Activated naive CD4-positive, alpha-beta T cell treated with anti-CD3 and anti-CD28 coated beads for 36 hours (primary cell): ENCODE measurements at regions of chr17 and their contacts with region 1.

Region 1: GRCh38 chr17:44070455-44071197 is at the start of gene G6PC3:
- DNase-seq: peak; percentile 94
- H3K4me3 Mint-ChIP-seq: peak within 1 kb of the TSS; percentile 98
- H3K27ac Mint-ChIP-seq: peak within 1 kb of the TSS; percentile 96
- H3K4me1 Mint-ChIP-seq: peaks cover 42% of the 10 kb centered on the region
- H3K27me3 Mint-ChIP-seq: no peaks in the 10 kb centered on the region
- total RNA-seq, gene G6PC3: 15.9 to 19.4 TPM

Region 2: DNA sequence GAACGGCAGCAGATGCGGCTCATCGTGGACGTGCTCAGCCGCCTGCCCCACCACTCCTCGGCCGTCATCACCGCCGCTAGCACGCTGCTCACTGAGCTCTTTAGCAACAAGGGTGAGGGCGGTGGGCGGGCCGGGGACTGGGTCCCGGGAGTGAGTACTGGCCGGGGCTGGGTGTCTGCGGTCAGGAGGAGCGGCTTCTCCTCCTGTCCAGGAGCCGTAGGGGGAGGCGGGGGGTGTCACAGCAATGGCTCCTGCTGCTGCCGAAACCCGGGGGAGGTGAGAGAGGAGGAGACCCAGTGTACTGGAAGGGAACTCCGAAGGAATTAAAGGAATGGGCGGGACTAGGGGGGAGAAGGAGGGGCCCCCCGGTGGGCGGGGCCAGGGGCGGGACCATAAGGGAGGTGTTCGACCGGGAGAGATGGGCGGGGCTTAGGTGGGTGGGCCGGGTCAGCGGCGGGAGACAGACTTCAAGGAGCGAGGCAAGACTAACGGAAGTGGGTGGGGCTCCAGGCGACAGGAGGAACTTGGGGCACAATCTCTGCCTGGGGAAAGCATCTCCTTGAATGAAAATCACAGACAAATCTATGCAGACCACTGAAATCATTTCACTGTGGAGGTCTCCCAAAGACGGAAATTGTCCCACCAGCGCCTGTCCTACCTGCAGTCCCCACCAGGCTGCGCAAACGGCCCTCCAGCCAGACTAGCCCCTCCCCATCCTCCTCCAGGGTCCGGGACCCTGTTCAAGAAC is 63.9 kb before region 1 on chr17:
- CTCF ChIA-PET with region 1: no interaction called
- intact Hi-C with region 1: loop called (anchors 1 kb)
- DNase-seq: peak; percentile 100
- H3K4me3 Mint-ChIP-seq: peak overlapping the region; percentile 81
- H3K27ac Mint-ChIP-seq: no peak overlapping the region
- H3K4me1 Mint-ChIP-seq: peaks cover 31% of the 10 kb centered on the region
- H3K27me3 Mint-ChIP-seq: peaks cover 18% of the 10 kb centered on the region

Region 3: DNA sequence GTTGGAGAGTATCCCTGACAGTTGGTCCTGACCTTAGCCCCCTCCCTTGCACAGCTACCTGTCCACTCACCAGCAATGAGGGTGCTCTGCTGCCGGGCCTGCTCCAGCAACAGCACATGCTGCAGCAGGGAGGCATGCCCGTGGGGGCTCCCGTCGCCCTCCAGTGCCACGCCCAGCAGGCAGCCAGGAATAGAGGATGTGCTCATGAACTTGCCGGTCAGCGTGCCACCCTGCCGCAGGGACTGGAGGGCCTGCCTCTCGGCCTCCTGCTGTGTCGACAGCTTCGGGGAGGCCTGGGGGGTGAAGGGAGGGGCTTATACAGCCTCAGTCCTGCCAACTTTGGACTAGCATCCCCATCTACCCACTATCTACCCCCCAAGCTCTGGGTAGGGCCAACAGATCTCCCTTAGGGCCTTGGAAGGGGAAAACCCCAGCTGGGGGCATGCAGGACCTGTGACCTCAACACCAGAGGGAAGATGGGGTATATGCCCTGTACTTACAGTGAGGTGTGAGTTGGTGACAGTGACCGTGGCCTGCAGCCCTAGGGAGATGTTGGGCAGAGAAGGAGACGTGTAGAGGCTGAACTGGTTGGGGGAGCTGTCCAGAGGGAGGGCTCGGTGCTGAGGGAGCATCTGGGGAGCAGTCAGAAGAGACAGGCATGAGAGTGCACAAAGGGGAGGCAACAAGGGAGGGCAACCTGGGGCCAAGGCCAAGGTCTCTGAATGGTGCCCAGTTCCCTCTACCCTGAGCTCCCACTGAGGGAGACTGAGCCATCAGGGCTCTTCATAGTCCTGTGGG is 20.8 kb after region 1 on chr17:
- CTCF ChIA-PET with region 1: no interaction called
- intact Hi-C with region 1: no loop called
- DNase-seq: no peak
- H3K4me3 Mint-ChIP-seq: no peak overlapping the region
- H3K27ac Mint-ChIP-seq: no peak overlapping the region
- H3K4me1 Mint-ChIP-seq: peaks cover 24% of the 10 kb centered on the region
- H3K27me3 Mint-ChIP-seq: no peaks in the 10 kb centered on the region

Region 4: DNA sequence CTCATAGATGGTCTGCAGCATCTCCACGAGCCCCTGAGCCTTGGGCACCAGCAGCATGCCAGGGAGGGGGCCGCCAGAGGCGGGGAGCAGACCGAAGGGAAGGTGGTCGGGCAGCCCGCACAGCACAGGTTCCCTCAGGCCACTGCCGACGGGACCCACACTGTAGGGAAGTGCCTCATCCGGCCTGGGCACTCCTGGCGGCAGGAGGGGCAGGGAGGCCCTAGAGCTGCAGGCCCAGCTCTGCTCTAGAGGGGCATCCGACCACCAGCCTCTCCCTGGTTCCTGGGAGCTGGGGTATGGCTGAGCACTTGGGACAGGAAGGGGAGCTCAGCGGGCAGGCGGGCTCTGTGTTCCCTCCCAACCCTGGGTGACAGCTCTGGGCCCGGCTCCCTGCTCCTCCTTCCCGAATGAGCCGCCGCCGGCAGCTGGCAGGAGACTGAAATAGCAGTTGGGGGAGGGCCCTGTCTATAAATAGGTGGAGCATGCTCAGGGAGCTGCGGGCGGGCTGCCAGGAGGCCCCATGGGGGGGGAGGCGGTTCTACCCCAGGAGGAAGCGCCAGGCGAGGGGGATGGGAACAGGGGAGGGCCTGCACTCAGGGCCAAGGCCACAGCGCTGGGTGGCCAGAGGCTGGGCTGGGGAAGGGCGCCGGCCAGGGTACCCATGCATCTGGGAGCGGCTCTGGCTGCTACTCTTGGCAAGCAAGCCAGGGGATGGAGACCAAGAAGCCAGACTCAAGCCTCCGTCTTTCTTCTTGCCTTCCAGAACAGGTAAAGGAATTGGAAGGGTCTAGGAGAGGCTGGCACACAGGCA is 40.4 kb after region 1 on chr17:
- CTCF ChIA-PET with region 1: interaction called, 6 read pairs
- intact Hi-C with region 1: loop called (anchors 2 kb)
- DNase-seq: peak; percentile 87
- H3K4me3 Mint-ChIP-seq: peak overlapping the region; percentile 29
- H3K27ac Mint-ChIP-seq: no peak overlapping the region
- H3K4me1 Mint-ChIP-seq: peaks cover 26% of the 10 kb centered on the region
- H3K27me3 Mint-ChIP-seq: no peaks in the 10 kb centered on the region

Region 5: DNA sequence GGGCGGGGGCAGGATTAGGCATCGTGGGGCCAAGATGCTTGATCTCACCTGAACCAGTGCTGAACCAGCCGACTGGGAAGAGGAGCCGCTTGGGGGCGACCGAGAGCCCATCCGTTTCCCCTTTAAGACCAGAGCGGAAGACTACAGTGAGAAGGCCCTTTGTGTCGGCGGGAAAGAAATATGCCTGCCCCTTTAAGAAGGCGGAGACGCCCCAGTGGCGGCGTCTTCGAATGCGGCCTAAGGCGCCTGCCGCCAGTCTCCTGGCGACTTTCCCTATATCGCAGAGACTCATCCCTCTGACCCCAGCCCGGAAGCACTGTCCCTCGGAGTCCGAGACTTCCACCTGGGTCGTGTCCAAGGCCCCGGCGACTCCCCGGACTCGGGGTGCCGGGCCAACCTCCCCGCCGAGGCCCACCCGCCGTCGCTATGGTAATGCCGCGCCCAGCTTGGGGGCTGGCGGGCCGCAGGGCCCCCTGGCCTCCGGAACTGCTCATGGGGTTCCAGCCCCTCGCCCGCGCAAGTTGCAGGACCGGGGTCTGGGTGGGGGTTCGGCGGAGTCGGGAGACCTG is 71.2 kb after region 1 on chr17 and contains the start of gene HROB:
- CTCF ChIA-PET with region 1: no interaction called
- intact Hi-C with region 1: loop called (anchors 1 kb)
- DNase-seq: peak; percentile 100
- H3K4me3 Mint-ChIP-seq: peak within 1 kb of the TSS; percentile 89
- H3K27ac Mint-ChIP-seq: peak within 1 kb of the TSS; percentile 87
- H3K4me1 Mint-ChIP-seq: peaks cover 21% of the 10 kb centered on the region
- H3K27me3 Mint-ChIP-seq: no peaks in the 10 kb centered on the region
- total RNA-seq, gene HROB: 16.9 to 17.6 TPM

Region 6: GRCh38 chr17:44199553-44200477 is 129.2 kb after region 1 on chr17 and contains the start of gene ATXN7L3:
- CTCF ChIA-PET with region 1: no interaction called
- intact Hi-C with region 1: no loop called
- DNase-seq: peak; percentile 100
- H3K4me3 Mint-ChIP-seq: peak within 1 kb of the TSS; percentile 86
- H3K27ac Mint-ChIP-seq: peak within 1 kb of the TSS; percentile 91
- H3K4me1 Mint-ChIP-seq: peaks cover 36% of the 10 kb centered on the region
- H3K27me3 Mint-ChIP-seq: no peaks in the 10 kb centered on the region
- total RNA-seq, gene ATXN7L3: 53.3 to 53.9 TPM

Region 7: GRCh38 chr17:44324571-44325275 is 254.1 kb after region 1 on chr17 and contains the start of gene SLC25A39:
- CTCF ChIA-PET with region 1: no interaction called
- intact Hi-C with region 1: loop called (anchors 5 kb)
- DNase-seq: peak; percentile 93
- H3K4me3 Mint-ChIP-seq: peak within 1 kb of the TSS; percentile 87
- H3K27ac Mint-ChIP-seq: peak within 1 kb of the TSS; percentile 87
- H3K4me1 Mint-ChIP-seq: peaks cover 30% of the 10 kb centered on the region
- H3K27me3 Mint-ChIP-seq: no peaks in the 10 kb centered on the region
- total RNA-seq, gene SLC25A39: 146 to 149 TPM